ENCODE measurements at regions of chr6 and their contacts with region 1.

Region 1: GRCh38 chr6:105510746-105511145 is 107.9 kb upstream of the PREP start:
- DNase-seq: no peak
- ATAC-seq: no peak
- H3K4me3 ChIP-seq: no peak overlapping the region
- H3K27ac ChIP-seq: no peak overlapping the region
- H3K4me1 ChIP-seq: no peaks in the 10 kb centered on the region
- H3K27me3 ChIP-seq: no peaks in the 10 kb centered on the region; a peak in 1 of 4 replicates
- CTCF ChIP-seq: no peak
- EP300 ChIP-seq: no peak
- POLR2A ChIP-seq: no peak
- RAD21 ChIP-seq: no peak

Region 2: DNA sequence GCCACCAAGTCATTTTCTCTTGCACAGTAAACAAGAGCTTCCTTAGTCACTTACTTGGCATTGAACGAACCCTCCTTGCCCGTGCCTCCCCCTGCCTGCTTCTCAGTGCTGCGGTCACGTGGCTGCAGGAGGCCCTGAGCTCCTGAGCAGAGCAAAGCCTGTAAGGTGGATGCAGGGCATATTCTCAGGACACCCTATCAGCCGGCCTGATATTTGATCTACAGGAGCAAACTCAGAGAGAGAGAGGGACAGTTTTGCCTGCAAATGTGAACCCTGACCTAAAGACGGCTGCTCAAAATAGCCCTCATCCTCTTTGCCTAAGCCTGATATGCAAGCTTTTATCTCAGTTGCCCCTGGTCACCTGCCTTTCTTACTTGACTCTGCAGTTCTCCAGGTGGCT is 238.0 kb before region 1 on chr6:
- CTCF ChIA-PET with region 1: no interaction called
- POLR2A ChIA-PET with region 1: no interaction called
- RAD21 ChIA-PET with region 1: no interaction called
- SMC1A ChIA-PET with region 1: no interaction called
- in situ Hi-C with region 1: no loop called
- intact Hi-C with region 1: no loop called
- DNase-seq: no peak
- ATAC-seq: no peak
- H3K4me3 ChIP-seq: no peak overlapping the region
- H3K27ac ChIP-seq: no peak overlapping the region
- H3K4me1 ChIP-seq: no peaks in the 10 kb centered on the region
- H3K27me3 ChIP-seq: no peaks in the 10 kb centered on the region
- CTCF ChIP-seq: no peak
- EP300 ChIP-seq: no peak
- POLR2A ChIP-seq: no peak
- RAD21 ChIP-seq: no peak

Region 3: GRCh38 chr6:105389543-105389942 is 121.2 kb before region 1 on chr6:
- CTCF ChIA-PET with region 1: no interaction called
- POLR2A ChIA-PET with region 1: no interaction called
- RAD21 ChIA-PET with region 1: no interaction called
- SMC1A ChIA-PET with region 1: no interaction called
- in situ Hi-C with region 1: no loop called
- intact Hi-C with region 1: no loop called
- DNase-seq: no peak
- ATAC-seq: no peak
- H3K4me3 ChIP-seq: no peak overlapping the region
- H3K27ac ChIP-seq: no peak overlapping the region
- H3K4me1 ChIP-seq: no peaks in the 10 kb centered on the region
- H3K27me3 ChIP-seq: no peaks in the 10 kb centered on the region
- CTCF ChIP-seq: no peak
- EP300 ChIP-seq: no peak
- POLR2A ChIP-seq: no peak
- RAD21 ChIP-seq: no peak

Region 4: GRCh38 chr6:105500693-105501092 is 10.1 kb before region 1 on chr6:
- CTCF ChIA-PET with region 1: interaction called, 4 read pairs
- POLR2A ChIA-PET with region 1: interaction called, 5 read pairs
- RAD21 ChIA-PET with region 1: no interaction called
- SMC1A ChIA-PET with region 1: interaction called, 15 read pairs
- in situ Hi-C with region 1: no loop called
- intact Hi-C with region 1: no loop called
- DNase-seq: no peak
- ATAC-seq: peak; percentile 39; the same call in 1 of the 3 replicates
- H3K4me3 ChIP-seq: no peak overlapping the region
- H3K27ac ChIP-seq: no peak overlapping the region
- H3K4me1 ChIP-seq: peaks cover 6% of the 10 kb centered on the region
- H3K27me3 ChIP-seq: peaks cover 0 to 2% of the 10 kb centered on the region in 2 experiments; a peak in 2 of 4 replicates
- CTCF ChIP-seq: no peak
- EP300 ChIP-seq: no peak
- POLR2A ChIP-seq: no peak
- RAD21 ChIP-seq: no peak

Measured in GM12878 (cell line).